ENCODE measurements at regions of chr19 and their contacts with region 1.

Region 1: GRCh38 chr19:47863514-47863936 is 4.5 kb downstream of the TPRX2 start:
- DNase-seq: peak; percentile 62 to 71 (median 68)
- H3K4me3 ChIP-seq: no peak overlapping the region
- H3K4me3 Mint-ChIP-seq: no peak overlapping the region
- H3K27ac ChIP-seq: no peak overlapping the region
- H3K27ac Mint-ChIP-seq: no peak overlapping the region
- H3K4me1 ChIP-seq: no peaks in the 10 kb centered on the region
- H3K4me1 Mint-ChIP-seq: peaks cover 0 to 5% (median 0%) of the 10 kb centered on the region in 4 donors
- H3K27me3 ChIP-seq: no peaks in the 10 kb centered on the region
- H3K27me3 Mint-ChIP-seq: peaks cover 6 to 14% of the 10 kb centered on the region in 2 donors

Region 2: GRCh38 chr19:47813304-47814004 is 50.1 kb before region 1 on chr19:
- CTCF ChIA-PET with region 1: no interaction called
- POLR2A ChIA-PET with region 1: no interaction called
- intact Hi-C with region 1: loop called (anchors 1 kb)
- DNase-seq: peak; percentile 53 to 59 (median 58)
- H3K4me3 ChIP-seq: no peak overlapping the region
- H3K4me3 Mint-ChIP-seq: no peak overlapping the region
- H3K27ac ChIP-seq: no peak overlapping the region
- H3K27ac Mint-ChIP-seq: peak overlapping the region in 1 of 7 donors; percentile 54
- H3K4me1 ChIP-seq: no peaks in the 10 kb centered on the region
- H3K4me1 Mint-ChIP-seq: no peaks in the 10 kb centered on the region
- H3K27me3 ChIP-seq: no peaks in the 10 kb centered on the region
- H3K27me3 Mint-ChIP-seq: peaks cover 8 to 11% of the 10 kb centered on the region in 2 donors

Region 3: GRCh38 chr19:47853003-47853402 is 10.5 kb before region 1 on chr19:
- CTCF ChIA-PET with region 1: interaction called, 15 read pairs
- POLR2A ChIA-PET with region 1: no interaction called
- intact Hi-C with region 1: no loop called
- DNase-seq: no peak
- H3K4me3 ChIP-seq: no peak overlapping the region
- H3K4me3 Mint-ChIP-seq: no peak overlapping the region
- H3K27ac ChIP-seq: no peak overlapping the region
- H3K27ac Mint-ChIP-seq: peak overlapping the region in 1 of 7 donors; percentile 6
- H3K4me1 ChIP-seq: peaks cover 10% of the 10 kb centered on the region
- H3K4me1 Mint-ChIP-seq: peaks cover 7 to 19% (median 11%) of the 10 kb centered on the region in 4 donors
- H3K27me3 ChIP-seq: peaks cover 10% of the 10 kb centered on the region
- H3K27me3 Mint-ChIP-seq: peaks cover 32 to 44% of the 10 kb centered on the region in 2 donors

Region 4: GRCh38 chr19:47881757-47882156 is 18.2 kb after region 1 on chr19:
- CTCF ChIA-PET with region 1: interaction called, 13 read pairs
- POLR2A ChIA-PET with region 1: no interaction called
- intact Hi-C with region 1: no loop called
- DNase-seq: no peak
- H3K4me3 ChIP-seq: no peak overlapping the region
- H3K4me3 Mint-ChIP-seq: no peak overlapping the region
- H3K27ac ChIP-seq: no peak overlapping the region
- H3K27ac Mint-ChIP-seq: no peak overlapping the region
- H3K4me1 ChIP-seq: no peaks in the 10 kb centered on the region
- H3K4me1 Mint-ChIP-seq: no peaks in the 10 kb centered on the region
- H3K27me3 ChIP-seq: no peaks in the 10 kb centered on the region
- H3K27me3 Mint-ChIP-seq: peaks cover 9 to 23% of the 10 kb centered on the region in 2 donors

Region 5: DNA sequence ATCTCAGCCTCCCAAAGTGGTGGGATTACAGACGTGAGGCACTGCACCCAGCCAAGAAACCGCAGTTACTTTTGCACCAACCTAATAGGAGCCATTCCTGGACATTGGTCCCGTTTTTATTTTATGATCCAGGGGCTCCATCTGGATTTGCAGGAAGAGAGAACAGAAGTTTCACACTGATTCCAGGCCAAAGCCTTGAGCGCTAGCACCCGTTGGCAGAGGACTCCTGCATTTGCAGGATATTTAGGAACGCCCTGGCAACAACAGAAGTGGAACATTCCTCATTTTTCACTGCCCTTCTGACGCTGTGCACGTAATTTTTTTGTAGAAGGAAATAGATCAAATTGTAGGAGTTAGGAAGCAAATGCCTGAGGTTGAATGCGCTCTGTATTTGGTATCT is 34.3 kb after region 1 on chr19:
- CTCF ChIA-PET with region 1: no interaction called
- POLR2A ChIA-PET with region 1: no interaction called
- intact Hi-C with region 1: no loop called
- DNase-seq: no peak
- H3K4me3 ChIP-seq: no peak overlapping the region
- H3K4me3 Mint-ChIP-seq: no peak overlapping the region
- H3K27ac ChIP-seq: no peak overlapping the region
- H3K27ac Mint-ChIP-seq: peak overlapping the region in 1 of 7 donors; percentile 41
- H3K4me1 ChIP-seq: no peaks in the 10 kb centered on the region
- H3K4me1 Mint-ChIP-seq: no peaks in the 10 kb centered on the region
- H3K27me3 ChIP-seq: no peaks in the 10 kb centered on the region
- H3K27me3 Mint-ChIP-seq: peaks cover 13 to 15% of the 10 kb centered on the region in 2 donors